PC-3 (cell line): ENCODE measurements at regions of chr9 and their contacts with region 1.

Region 1: GRCh38 chr9:102164247-102164646 is 425.8 kb upstream of the GRIN3A start:
- DNase-seq: no peak
- ATAC-seq: no peak
- H3K4me3 ChIP-seq: no peak overlapping the region
- H3K27ac ChIP-seq: no peak overlapping the region
- H3K4me1 ChIP-seq: no peaks in the 10 kb centered on the region
- H3K27me3 ChIP-seq: no peaks in the 10 kb centered on the region
- CTCF ChIP-seq: no peak

Region 2: GRCh38 chr9:102237520-102237919 is 73.3 kb after region 1 on chr9:
- CTCF ChIA-PET with region 1: no interaction called
- POLR2A ChIA-PET with region 1: no interaction called
- intact Hi-C with region 1: loop called (anchors 2 kb)
- DNase-seq: no peak
- ATAC-seq: no peak
- H3K4me3 ChIP-seq: no peak overlapping the region
- H3K27ac ChIP-seq: no peak overlapping the region
- H3K4me1 ChIP-seq: no peaks in the 10 kb centered on the region
- H3K27me3 ChIP-seq: no peaks in the 10 kb centered on the region
- CTCF ChIP-seq: no peak